ENCODE measurements at regions of chr6 and their contacts with region 1.

Region 1: GRCh38 chr6:168201383-168201782 is 118.2 kb downstream of the DACT2 start:
- DNase-seq: no peak
- H3K4me3 ChIP-seq: no peak overlapping the region
- CTCF ChIP-seq: no peak
- POLR2A ChIP-seq: no peak

Region 2: GRCh38 chr6:168292826-168293225 is 91.4 kb after region 1 on chr6:
- intact Hi-C with region 1: loop called (anchors 10 kb)
- DNase-seq: peak in 1 of 2 donors; percentile 69
- H3K4me3 ChIP-seq: no peak overlapping the region
- CTCF ChIP-seq: no peak
- POLR2A ChIP-seq: no peak

Measured in lower leg skin (tissue), 4 donors.